ENCODE measurements at regions of chr12 and their contacts with region 1.

Region 1: DNA sequence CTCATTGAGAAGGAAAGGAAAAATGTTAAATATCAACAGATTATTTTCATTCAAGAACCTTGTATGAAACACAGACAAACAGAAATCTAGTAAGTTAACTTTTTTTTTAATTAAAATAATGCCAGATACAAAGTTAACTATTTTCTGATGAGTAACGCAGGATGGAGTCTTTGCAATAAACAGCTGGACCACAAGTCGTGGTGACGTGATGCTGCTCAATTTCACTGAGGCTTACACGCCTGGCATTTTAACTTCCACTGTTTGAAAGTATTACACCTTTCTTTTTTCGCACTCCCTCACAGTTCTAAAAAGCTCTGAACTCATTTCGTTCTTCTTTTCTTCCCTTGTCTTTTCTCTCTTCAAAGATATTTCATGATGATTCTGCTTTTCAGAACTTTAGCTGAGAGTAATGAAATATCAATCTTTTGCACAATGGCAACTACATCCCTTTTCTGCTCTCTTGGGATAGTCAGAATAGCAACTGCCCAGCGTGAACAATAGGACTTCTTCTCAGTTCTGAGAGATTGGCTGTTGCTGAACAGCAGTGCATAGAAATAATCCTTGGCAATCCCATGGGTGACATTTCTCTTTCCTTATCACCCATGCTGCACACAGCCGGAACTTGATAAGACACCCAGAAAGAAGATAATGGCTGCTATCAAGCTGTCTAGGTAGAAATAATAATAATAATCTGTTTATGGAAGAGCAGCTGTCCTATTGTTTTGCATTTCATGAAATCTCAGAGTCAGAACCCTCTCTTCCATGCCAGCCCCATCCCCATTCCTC is 160.5 kb downstream of the BTG1 start:
- DNase-seq: no peak
- CTCF ChIP-seq: no peak

Region 2: GRCh38 chr12:91965781-91966180 is 19.4 kb before region 1 on chr12:
- CTCF ChIA-PET with region 1: interaction called, 15 read pairs
- POLR2A ChIA-PET with region 1: no interaction called
- DNase-seq: no peak
- CTCF ChIP-seq: no peak

Measured in GM10248 (cell line).